ENCODE measurements at regions of chr6 and their contacts with region 1.

Region 1: DNA sequence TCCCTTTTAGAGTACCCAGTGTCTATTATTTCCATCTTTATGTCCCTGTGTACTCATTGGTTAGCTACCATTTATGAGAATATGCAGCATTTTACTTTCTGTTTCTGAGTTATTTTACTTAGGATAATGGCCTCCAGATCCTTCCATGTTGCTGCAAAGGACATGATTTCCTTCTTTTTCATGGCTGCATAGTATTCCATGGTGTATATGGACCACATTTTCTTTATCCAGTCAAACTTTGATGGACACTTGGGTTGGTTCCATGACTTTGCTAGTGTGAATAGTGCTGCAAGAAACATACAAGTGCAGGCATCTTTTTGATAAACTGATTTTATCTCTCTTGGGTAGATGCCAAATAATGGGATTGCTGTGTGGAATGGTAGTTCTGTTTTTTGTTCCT is 55.4 kb downstream of the ZBTB2 start:
- DNase-seq: no peak
- ATAC-seq: no peak
- H3K4me3 ChIP-seq: no peak overlapping the region
- H3K27ac ChIP-seq: no peak overlapping the region
- H3K4me1 ChIP-seq: 0 out of 3 replicates have a peak, but pooled peaks cover 3% of the 10 kb centered on the region
- CTCF ChIP-seq: no peak
- EP300 ChIP-seq: no peak
- POLR2A ChIP-seq: no peak
- RAD21 ChIP-seq: no peak

Region 2: GRCh38 chr6:150902142-150902776 is 433.7 kb before region 1 on chr6:
- CTCF ChIA-PET with region 1: interaction called, 11 read pairs
- POLR2A ChIA-PET with region 1: no interaction called
- DNase-seq: no peak
- ATAC-seq: no peak
- H3K4me3 ChIP-seq: no peak overlapping the region
- H3K27ac ChIP-seq: peak overlapping the region in 1 of 2 experiments; percentile 28; a peak in 1 of 6 replicates
- H3K4me1 ChIP-seq: peaks cover 18% of the 10 kb centered on the region
- CTCF ChIP-seq: no peak
- EP300 ChIP-seq: no peak
- POLR2A ChIP-seq: no peak
- RAD21 ChIP-seq: no peak

Region 3: GRCh38 chr6:151004415-151005024 is 331.4 kb before region 1 on chr6:
- CTCF ChIA-PET with region 1: interaction called, 12 read pairs
- POLR2A ChIA-PET with region 1: interaction called, 3 read pairs
- DNase-seq: peak; percentile 30 to 75
- ATAC-seq: peak; percentile 82 to 88
- H3K4me3 ChIP-seq: no peak overlapping the region
- H3K27ac ChIP-seq: peak overlapping the region; percentile 58 to 80; a peak in 5 of 6 replicates
- H3K4me1 ChIP-seq: peaks cover 42% of the 10 kb centered on the region
- CTCF ChIP-seq: no peak
- EP300 ChIP-seq: peak; percentile 23 to 45; a peak in 2 of 5 replicates
- POLR2A ChIP-seq: no peak
- RAD21 ChIP-seq: no peak

Measured in A549 (cell line).